Posterior cingulate gyrus (tissue), 11 donors: ENCODE measurements at regions of chr16 and their contacts with region 1.

Region 1: DNA sequence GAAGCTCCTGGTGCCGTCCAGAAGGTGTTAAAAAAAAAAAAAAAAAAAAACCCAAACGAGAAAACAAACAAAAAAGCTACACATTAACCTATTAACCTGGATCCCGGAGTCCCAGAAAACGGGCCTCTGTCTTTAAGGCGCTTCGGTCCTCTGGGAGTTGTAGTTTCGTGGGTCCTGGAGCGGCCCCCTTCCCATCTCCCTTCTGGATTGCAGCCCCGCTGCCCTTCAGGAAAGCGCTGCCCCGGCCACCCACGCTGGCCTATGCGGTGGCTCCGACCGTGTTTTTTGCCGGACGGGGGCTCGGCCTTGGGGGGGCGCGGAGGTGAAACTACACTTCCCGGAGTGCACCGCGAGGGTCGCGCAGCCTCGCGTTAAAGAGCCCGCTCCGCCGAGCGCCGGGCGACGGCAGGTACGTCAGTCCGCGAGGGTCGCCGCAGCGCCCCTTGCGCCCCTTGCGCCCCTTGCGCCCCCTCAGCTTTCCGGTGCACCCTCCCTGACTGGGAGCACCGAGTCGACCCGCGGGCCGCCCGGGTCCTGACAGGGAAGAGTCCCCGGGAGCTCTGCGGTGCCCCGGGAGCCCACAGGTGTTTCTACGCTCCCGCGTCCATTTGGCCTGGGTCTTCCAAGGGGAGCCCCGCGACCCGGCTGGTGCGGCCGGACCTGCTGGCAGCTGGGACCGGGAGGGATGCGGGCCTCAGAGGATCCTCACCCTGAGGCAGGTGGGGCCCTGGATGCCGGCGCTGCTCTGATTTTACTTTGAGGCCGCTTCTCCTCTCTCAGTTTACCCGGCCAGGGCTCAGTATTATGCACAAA is at the start of gene FCSK:
- DNase-seq: peak; percentile 57 to 95 (median 70)

Region 2: DNA sequence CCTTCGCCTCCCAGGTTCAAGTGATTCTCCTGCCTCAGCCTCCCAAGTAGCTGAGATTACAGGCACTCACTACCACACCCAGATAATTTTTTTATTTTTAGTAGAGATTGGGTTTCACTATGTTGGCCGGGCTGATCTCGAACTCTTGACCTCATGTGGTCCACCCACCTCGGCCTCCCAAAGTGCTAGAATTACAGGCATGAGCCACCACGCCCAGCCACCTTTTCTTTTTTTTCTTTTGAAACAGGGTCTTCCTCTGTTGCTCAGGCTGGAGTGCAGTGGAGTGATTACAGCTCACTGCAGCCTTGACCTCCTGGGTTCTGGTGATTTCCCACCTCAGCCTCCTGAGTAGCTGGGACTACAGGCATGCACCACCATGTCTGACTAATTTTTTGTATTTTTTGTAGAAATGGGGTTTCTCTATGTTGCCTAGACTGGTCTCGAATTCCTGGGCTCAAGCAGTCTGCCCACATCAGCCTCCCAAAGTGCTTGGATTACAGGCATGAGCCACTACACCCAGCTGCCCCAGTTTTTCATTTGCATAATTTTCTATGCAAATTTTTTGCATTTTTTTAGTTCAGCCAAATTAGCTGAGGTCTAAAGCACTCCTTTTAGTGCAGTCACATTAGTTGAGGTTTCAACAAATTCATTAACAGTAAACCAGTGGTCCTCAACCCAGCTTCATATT is 681.0 kb before region 1 on chr16:
- intact Hi-C with region 1: no loop called
- DNase-seq: no peak

Region 3: GRCh38 chr16:70438969-70439862 is 15.2 kb before region 1 on chr16 and contains the start of gene ST3GAL2:
- intact Hi-C with region 1: loop called (anchors 2 kb)
- DNase-seq: peak; percentile 92 to 99 (median 96)

Region 4: DNA sequence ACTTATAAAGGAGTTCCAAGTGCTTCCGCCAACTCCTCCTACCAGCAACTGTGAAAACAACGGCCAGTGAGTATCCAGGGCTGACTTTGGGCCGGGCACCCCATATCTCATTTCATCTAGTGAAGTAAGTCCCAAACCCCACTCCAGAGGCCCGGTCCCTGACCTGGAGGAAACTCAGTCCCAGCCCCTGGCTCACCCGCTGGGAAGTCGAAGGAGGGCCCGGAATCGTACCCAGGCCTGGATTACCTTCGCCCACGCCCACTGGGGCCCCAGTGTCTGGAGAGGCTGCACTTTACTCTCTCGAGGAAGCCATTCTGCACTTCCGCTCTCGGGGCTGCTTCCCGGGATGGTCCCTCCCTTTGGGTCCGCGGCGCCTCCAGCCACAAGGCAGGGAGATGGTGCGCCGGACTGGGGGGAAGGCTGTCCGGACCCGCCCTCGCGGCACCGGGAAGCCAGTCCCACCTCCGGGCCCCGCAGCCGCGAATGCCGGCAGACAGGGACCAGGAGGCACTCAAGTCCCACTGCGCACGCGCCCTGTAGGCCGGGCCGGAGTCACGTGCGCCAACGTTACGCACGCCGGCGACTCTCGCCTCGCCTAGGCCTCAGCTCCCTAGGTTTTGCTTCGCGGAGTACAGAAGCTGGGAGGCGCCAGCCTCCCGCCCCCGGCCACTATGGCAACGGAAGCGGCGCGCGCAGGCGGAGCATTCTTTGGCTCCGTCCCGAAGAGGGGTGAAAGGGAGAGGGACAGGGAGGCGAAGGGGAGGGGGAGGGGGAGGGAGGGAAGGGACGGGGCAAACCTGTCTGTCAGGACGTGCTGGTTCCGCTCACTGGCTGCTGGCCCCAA is 834.7 kb after region 1 on chr16 and contains the start of gene CMTR2:
- intact Hi-C with region 1: no loop called
- DNase-seq: peak; percentile 91 to 99 (median 94)